ENCODE measurements at regions of chr11 and their contacts with region 1.

Region 1: GRCh38 chr11:45771566-45772448 is 33.1 kb upstream of the SLC35C1 start:
- DNase-seq: peak; percentile 64 to 88
- ATAC-seq: peak; percentile 98

Region 2: GRCh38 chr11:45339729-45340519 is 431.9 kb before region 1 on chr11:
- intact Hi-C with region 1: loop called in 1 of 2 experiments (anchors 5 kb)
- DNase-seq: peak; percentile 92 to 97
- ATAC-seq: peak; percentile 99

Measured in left colon (tissue), 2 donors.